ENCODE measurements at regions of chr15 and their contacts with region 1.

Region 1: DNA sequence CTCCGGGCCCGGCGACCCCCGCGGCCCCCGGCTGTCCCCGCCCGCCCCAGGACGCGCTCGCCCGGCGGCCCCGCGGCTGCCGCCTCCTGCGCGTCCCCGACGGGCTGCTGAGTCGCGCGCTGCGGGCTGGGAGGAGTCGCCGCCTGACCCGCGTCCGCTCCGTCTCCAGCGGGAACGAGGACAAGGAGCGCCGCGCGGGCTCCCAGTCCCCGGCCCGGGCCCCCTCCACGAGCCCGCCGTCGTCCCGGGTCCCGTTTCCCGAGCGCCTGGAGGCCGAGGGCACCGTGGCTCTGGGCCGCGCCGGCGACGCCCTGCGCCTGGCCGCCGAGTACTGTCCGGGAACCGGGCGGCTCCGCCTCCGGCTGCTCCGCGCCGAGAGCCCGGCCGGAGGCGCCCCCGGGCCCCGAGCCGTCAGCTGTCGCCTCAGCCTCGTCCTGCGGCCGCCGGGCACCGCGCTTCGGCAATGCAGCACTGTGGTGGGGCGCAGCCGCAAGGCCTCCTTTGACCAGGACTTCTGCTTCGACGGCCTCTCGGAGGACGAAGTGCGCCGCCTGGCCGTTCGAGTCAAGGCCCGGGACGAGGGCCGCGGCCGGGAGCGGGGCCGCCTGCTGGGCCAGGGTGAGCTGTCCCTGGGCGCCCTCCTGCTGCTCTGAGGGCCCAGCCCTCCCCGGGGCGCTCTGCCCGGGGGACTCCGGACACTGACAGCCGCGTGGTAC is 1.5 kb downstream of the C2CD4A start:
- DNase-seq: peak; percentile 45
- H3K4me3 Mint-ChIP-seq: peak overlapping the region; percentile 75
- H3K27ac Mint-ChIP-seq: peak overlapping the region; percentile 65
- H3K4me1 Mint-ChIP-seq: peaks cover 20% of the 10 kb centered on the region
- H3K27me3 Mint-ChIP-seq: peaks cover 17% of the 10 kb centered on the region

Region 2: GRCh38 chr15:61871926-61872522 is 196.2 kb before region 1 on chr15:
- CTCF ChIA-PET with region 1: interaction called, 10 read pairs
- POLR2A ChIA-PET with region 1: no interaction called
- intact Hi-C with region 1: loop called (anchors 2 kb)
- DNase-seq: no peak
- H3K4me3 Mint-ChIP-seq: no peak overlapping the region
- H3K27ac Mint-ChIP-seq: no peak overlapping the region
- H3K4me1 Mint-ChIP-seq: no peaks in the 10 kb centered on the region
- H3K27me3 Mint-ChIP-seq: no peaks in the 10 kb centered on the region

Region 3: DNA sequence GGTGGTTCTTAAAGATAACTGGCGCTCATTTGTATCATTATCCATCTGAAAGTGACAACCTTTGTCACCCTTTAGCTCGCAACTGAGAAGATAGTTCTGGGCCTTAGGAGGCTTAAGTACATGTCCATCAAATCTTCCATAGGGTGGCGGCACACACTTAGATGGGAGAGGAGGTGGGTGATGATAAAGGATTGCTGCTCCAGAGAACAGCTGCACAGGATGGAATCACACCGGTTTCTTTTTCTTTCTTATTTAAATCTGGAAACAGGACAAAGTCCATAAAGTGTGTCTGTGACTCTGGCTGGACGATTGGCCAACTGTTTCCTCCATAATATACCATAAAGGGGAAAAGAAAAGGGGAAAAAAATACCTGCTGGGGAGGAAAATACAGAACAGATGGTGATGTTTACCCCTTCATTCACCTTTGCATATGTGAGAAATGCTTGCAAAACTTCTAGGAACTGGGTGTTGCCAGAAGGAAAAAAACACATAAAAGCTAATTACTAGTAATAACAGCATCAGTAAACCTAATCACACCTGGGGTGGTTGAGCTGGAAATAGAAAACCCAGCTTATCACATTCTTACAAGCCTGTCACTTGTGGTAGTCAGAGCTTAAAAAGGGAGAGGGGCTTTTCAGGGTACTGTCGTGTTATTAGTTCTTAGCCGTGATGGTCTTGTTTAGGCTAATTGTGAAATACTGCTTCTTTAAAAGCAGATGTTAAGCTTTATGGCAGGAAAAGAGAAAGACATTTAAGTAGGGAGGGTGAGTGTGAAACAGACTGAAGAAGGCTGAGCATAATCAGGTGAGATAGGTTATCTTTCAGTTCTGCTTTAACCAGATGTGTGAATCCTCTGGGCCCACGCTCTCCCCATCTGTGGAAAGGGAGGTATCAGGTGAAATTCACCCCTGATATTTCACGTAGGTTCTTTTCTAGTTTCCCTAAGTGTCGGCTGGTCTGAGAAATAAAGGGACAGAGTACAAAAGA is 15.2 kb after region 1 on chr15:
- CTCF ChIA-PET with region 1: interaction called, 11 read pairs
- POLR2A ChIA-PET with region 1: no interaction called
- intact Hi-C with region 1: no loop called
- DNase-seq: no peak
- H3K4me3 Mint-ChIP-seq: no peak overlapping the region
- H3K27ac Mint-ChIP-seq: no peak overlapping the region
- H3K4me1 Mint-ChIP-seq: peaks cover 9% of the 10 kb centered on the region
- H3K27me3 Mint-ChIP-seq: no peaks in the 10 kb centered on the region

Region 4: GRCh38 chr15:62119227-62119864 is 51.1 kb after region 1 on chr15:
- CTCF ChIA-PET with region 1: interaction called, 5 read pairs
- POLR2A ChIA-PET with region 1: no interaction called
- intact Hi-C with region 1: loop called (anchors 1 kb)
- DNase-seq: peak; percentile 43
- H3K4me3 Mint-ChIP-seq: peak overlapping the region; percentile 24
- H3K27ac Mint-ChIP-seq: peak overlapping the region; percentile 89
- H3K4me1 Mint-ChIP-seq: peaks cover 52% of the 10 kb centered on the region
- H3K27me3 Mint-ChIP-seq: no peaks in the 10 kb centered on the region

Region 5: GRCh38 chr15:62254137-62254934 is 186.1 kb after region 1 on chr15:
- CTCF ChIA-PET with region 1: interaction called, 22 read pairs
- POLR2A ChIA-PET with region 1: no interaction called
- intact Hi-C with region 1: no loop called
- DNase-seq: peak; percentile 79
- H3K4me3 Mint-ChIP-seq: no peak overlapping the region
- H3K27ac Mint-ChIP-seq: no peak overlapping the region
- H3K4me1 Mint-ChIP-seq: no peaks in the 10 kb centered on the region
- H3K27me3 Mint-ChIP-seq: peaks cover 7% of the 10 kb centered on the region